Prostate gland (tissue), 2 donors: ENCODE measurements at regions of chr6 and their contacts with region 1.

Region 1: DNA sequence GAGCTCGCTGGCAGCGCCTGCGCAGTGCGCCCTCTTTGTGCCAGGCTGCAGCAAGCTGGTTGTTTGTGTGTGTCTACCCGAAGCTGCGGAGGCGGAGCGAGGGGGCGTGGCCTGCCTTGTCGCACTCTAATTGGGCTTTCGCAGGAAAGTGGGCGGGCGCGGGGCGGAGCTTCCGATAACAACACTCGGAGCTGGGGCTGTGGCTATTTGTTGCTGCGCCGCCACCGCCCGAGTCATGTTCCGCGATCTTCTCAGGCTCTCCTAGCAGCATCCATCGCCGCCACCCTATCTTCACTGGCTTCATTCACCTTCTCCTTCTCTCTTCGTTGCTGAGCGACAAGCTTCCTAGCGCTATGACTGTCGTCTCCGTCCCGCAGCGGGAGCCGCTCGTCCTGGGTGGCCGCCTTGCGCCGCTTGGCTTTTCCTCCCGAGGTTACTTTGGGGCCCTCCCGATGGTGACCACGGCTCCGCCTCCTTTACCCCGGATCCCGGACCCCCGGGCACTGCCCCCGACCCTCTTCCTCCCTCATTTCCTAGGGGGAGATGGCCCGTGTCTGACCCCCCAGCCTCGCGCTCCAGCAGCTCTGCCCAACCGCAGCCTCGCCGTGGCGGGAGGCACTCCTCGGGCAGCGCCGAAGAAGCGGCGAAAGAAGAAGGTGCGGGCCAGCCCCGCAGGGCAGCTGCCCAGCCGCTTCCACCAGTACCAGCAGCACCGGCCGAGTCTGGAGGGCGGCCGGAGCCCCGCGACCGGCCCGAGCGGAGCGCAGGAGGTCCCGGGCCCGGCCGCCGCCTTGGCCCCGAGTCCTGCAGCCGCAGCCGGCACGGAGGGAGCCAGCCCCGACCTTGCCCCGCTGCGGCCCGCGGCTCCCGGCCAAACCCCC is at the start of gene PNRC1:
- DNase-seq: peak; percentile 100
- H3K4me3 ChIP-seq: peak within 1 kb of the TSS; percentile 100
- H3K27ac ChIP-seq: peak within 1 kb of the TSS; percentile 100
- H3K4me1 ChIP-seq: no peaks in the 10 kb centered on the region
- H3K27me3 ChIP-seq: no peaks in the 10 kb centered on the region
- CTCF ChIP-seq: peak in 1 of 4 experiments; percentile 11
- POLR2A ChIP-seq: peak; percentile 100
- total RNA-seq, gene PNRC1: 216 to 273 TPM

Region 2: DNA sequence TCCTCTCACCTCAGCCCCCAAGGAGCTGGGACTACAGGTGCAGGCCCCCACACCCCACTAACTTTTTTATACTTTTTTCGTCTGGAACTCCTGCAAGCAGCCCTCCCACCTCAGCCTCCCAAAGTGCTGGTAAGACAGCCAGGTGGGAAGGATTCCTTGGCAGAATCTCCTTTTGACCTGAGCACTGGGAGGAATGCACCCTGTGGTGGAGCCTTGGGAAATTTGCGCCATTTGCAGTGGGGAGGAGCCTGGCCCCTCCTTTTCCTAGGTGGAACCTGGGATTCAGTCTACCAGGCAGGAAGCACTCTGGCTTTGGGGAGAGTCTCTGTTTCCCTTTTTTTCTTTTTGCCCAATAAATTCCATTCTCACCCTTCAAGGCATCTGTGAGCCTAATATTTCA is 115.1 kb before region 1 on chr6:
- intact Hi-C with region 1: loop called (anchors 5 kb)
- DNase-seq: no peak
- H3K4me3 ChIP-seq: no peak overlapping the region
- H3K27ac ChIP-seq: no peak overlapping the region
- H3K4me1 ChIP-seq: no peaks in the 10 kb centered on the region
- H3K27me3 ChIP-seq: no peaks in the 10 kb centered on the region
- CTCF ChIP-seq: no peak
- POLR2A ChIP-seq: no peak

Region 3: DNA sequence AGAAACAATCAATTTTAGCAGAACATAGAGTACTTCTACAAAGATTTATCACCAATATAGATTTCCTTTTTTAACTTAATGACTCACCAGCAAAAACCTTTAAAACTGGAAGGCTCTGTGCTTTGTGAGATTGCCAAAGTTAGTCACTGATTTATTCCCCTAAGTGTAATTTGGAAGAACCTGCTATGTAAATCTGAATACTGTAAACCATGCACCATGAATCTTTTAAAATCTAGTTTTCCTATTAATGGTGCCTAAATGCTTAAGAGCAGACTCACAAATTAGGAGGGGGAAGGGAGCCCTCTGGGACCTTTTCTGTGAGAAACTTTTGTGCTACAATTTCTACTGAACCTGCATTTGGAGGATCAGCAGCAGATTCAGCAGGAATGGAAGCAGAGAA is 58.0 kb before region 1 on chr6:
- intact Hi-C with region 1: loop called (anchors 5 kb)
- DNase-seq: peak; percentile 39
- H3K4me3 ChIP-seq: no peak overlapping the region
- H3K27ac ChIP-seq: peak overlapping the region; percentile 53 to 55
- H3K4me1 ChIP-seq: peaks cover 6% of the 10 kb centered on the region
- H3K27me3 ChIP-seq: no peaks in the 10 kb centered on the region
- CTCF ChIP-seq: no peak
- POLR2A ChIP-seq: no peak

Region 4: GRCh38 chr6:89117211-89118108 is 36.7 kb after region 1 on chr6 and contains the start of gene SRSF12:
- intact Hi-C with region 1: loop called (anchors 5 kb)
- DNase-seq: peak; percentile 19
- H3K4me3 ChIP-seq: peak within 1 kb of the TSS; percentile 47 to 65
- H3K27ac ChIP-seq: peak within 1 kb of the TSS; percentile 13 to 38
- H3K4me1 ChIP-seq: no peaks in the 10 kb centered on the region
- H3K27me3 ChIP-seq: no peaks in the 10 kb centered on the region
- CTCF ChIP-seq: peak in 2 of 4 experiments; percentile 8 to 20
- POLR2A ChIP-seq: no peak
- total RNA-seq, gene SRSF12: 1.0 to 5.7 TPM

Region 5: GRCh38 chr6:89352278-89353117 is 271.7 kb after region 1 on chr6 and contains the start of gene UBE2J1:
- intact Hi-C with region 1: loop called (anchors 5 kb)
- DNase-seq: peak; percentile 88
- H3K4me3 ChIP-seq: peak within 1 kb of the TSS; percentile 84 to 91
- H3K27ac ChIP-seq: peak within 1 kb of the TSS; percentile 96 to 98
- H3K4me1 ChIP-seq: no peaks in the 10 kb centered on the region
- H3K27me3 ChIP-seq: no peaks in the 10 kb centered on the region
- CTCF ChIP-seq: no peak
- POLR2A ChIP-seq: peak; percentile 93
- total RNA-seq, gene UBE2J1: 31.7 to 98.4 TPM